Right ventricle myocardium inferior (tissue), 1 donor: ENCODE measurements at regions of chr4 and their contacts with region 1.

Region 1: DNA sequence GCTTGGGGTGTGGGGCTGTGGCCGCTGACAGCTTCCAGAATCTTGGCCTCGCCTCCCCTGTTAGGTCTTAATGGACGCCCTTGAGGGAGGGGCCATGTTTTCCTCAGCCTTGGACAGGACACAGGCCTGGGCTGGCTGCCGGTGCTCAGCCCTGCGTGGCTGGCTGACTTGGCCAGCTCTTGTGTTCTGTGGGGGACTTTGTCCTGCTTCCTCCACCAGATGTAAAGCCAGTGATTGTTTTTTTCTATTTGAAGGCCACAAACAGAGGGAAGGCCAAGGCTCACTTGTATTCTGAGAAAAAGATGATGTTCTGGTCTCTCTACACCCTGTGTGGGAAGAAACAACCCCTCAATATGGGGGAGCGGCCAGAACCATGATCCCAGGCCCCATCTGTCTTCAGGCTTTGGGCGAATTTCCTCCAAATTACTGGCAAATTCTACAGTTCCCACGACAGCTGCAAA is 71.3 kb downstream of the HTRA3 start:
- DNase-seq: peak; percentile 92
- ATAC-seq: peak; percentile 94

Region 2: GRCh38 chr4:8281519-8282133 is 59.2 kb before region 1 on chr4:
- intact Hi-C with region 1: loop called (anchors 2 kb)
- DNase-seq: peak; percentile 92
- ATAC-seq: peak; percentile 77

Region 3: GRCh38 chr4:8393593-8394038 is 52.8 kb after region 1 on chr4:
- intact Hi-C with region 1: loop called (anchors 2 kb)
- DNase-seq: peak; percentile 71
- ATAC-seq: peak; percentile 73